RWPE1 (cell line): ENCODE measurements at regions of chr4 and their contacts with region 1.

Region 1: DNA sequence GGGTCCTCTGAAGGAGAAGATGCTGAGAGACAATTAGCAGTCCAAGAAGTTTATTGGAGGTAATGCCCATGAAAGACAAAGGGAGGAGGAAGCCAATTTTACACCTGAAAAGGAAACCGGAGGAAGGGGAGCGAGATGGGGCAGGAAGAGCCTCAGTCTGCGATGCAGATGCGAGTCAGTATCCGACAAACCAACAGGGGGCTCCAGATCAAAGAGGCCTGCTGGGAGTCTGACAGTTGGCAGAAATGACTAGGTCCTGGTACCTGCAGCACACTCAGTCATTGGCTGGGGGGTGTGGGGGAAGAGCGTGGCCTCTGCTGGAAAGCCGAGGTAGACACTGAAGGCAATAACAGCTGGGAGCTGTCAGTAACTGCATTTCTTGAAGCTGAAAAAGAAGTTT is 231.1 kb upstream of the CENPE start:
- DNase-seq: no peak
- H3K27ac ChIP-seq: no peak overlapping the region
- CTCF ChIP-seq: no peak

Region 2: DNA sequence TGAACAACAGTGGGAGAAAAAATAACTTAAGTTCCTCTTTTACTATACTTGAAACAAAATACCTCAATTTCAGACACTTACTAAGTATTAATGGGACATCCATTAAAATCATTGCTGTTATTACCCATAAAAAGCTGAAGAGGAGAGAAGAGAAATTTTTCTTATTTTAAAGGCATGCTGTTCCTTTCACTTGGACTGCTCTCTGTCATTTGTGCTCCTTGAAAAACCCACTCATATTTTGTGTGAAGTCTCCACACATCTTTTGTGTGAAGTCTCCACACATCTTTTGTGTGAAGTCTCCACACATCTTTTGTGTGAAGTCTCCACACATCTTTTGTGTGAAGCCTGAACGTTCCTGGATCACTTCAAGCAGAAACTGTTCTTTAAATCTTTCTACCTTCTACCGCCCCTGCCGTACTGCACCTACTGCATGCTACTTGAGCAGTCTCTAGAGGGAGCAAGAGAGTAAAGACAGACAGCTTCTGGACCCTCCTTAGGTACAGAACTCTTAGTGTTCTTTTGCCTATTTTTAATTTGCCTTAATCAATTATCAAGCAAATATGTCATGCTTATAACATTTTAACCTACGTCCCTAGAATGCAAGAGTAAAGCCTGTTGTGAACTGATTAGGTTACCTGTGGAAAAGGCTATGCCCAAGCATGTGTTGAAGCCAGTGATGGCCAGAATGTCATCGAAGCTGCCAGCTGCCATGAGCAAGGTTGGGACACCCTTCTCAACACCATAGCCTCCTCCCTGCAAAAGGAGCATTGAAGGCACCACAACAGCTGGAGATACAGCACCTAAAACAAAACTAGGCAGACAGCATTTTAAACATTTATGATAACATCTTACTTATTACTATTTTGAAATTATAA is 382.6 kb before region 1 on chr4:
- CTCF ChIA-PET with region 1: no interaction called
- POLR2A ChIA-PET with region 1: no interaction called
- DNase-seq: peak; percentile 32
- H3K27ac ChIP-seq: no peak overlapping the region
- CTCF ChIP-seq: peak; percentile 70

Region 3: GRCh38 chr4:103904123-103904522 is 474.8 kb after region 1 on chr4:
- CTCF ChIA-PET with region 1: interaction called, 10 read pairs
- POLR2A ChIA-PET with region 1: no interaction called
- DNase-seq: no peak
- H3K27ac ChIP-seq: no peak overlapping the region
- CTCF ChIP-seq: no peak